ENCODE measurements at regions of chr21 and their contacts with region 1.

Region 1: DNA sequence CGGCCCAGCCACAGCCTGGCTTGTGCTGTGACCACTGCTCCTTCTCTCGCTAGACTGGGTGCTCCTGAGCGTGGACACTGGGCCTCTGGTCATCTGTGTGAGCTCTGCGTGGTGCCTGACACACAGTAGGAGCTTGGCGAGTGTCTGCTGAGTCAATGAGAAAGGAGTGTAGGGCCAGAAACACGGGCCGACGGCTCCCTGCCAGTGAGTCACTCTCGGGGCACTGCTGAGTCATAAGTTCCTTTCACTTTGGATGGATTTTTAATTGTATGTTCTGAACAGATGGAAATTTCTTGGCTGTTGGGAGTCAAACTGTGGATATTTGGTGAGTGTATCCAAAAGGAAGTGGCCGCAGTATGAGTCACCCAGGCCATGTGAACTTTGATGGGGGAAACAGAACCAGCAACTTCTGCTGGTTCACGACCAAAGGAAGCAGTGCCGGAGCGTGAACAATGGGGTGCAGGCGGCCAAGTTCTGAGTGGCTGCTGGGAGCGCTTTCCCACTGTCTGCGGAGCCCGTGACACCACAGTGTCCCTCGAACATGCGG is 41.0 kb upstream of the COL18A1 start:
- DNase-seq: peak; percentile 99
- ATAC-seq: peak; percentile 70
- H3K4me3 ChIP-seq: peak overlapping the region; percentile 25; the same call in 1 of the 2 replicates
- H3K27ac ChIP-seq: peak overlapping the region; percentile 98
- H3K4me1 ChIP-seq: peaks cover 46% of the 10 kb centered on the region
- H3K27me3 ChIP-seq: no peaks in the 10 kb centered on the region
- CTCF ChIP-seq: no peak

Region 2: DNA sequence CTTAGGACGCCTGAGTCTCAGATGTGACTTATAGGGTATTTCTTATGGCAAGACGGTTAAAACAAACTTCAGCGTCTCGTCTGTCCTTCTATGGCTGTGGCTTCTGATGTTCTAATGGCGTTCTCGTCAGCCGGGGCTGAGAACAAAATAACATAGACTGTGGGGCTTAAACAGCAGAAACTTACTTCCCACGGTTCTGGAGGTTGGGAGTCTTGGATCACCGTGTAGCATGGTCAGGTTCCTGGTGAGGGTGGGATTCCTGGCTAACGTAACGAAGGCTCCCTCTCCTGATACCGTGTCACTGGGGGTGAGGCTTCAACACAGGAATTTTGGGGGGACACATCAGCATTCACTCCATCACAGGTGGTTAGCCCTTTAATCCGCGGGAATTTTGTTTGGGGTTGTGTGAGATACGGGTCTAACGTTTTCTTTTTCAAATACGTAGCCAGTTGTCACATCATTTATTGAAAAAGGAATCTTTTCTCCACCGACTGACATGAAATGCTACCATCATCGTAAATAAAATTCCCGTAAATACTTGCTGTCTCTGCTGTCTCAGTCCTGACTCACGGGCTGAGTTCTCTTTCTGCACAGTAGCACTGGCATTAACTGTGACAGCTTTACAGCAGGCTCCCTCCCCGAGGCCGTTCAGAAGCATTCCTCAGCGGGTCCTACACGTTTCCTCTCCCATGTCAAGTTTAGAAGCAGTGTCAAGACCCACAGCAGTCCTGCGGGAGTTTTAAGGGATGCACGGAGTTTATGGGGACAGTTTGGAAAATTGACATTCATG is 68.2 kb before region 1 on chr21:
- CTCF ChIA-PET with region 1: no interaction called
- POLR2A ChIA-PET with region 1: no interaction called
- intact Hi-C with region 1: loop called (anchors 1 kb)
- DNase-seq: peak; percentile 84
- ATAC-seq: peak; percentile 61
- H3K4me3 ChIP-seq: peak overlapping the region; percentile 32
- H3K27ac ChIP-seq: peak overlapping the region; percentile 90
- H3K4me1 ChIP-seq: peaks cover 48% of the 10 kb centered on the region
- H3K27me3 ChIP-seq: no peaks in the 10 kb centered on the region
- CTCF ChIP-seq: no peak

Region 3: GRCh38 chr21:45330075-45330781 is 33.8 kb before region 1 on chr21:
- CTCF ChIA-PET with region 1: no interaction called
- POLR2A ChIA-PET with region 1: no interaction called
- intact Hi-C with region 1: loop called (anchors 1 kb)
- DNase-seq: peak; percentile 86
- ATAC-seq: peak; percentile 88
- H3K4me3 ChIP-seq: peak overlapping the region; percentile 48; the same call in 1 of the 2 replicates
- H3K27ac ChIP-seq: peak overlapping the region; percentile 71
- H3K4me1 ChIP-seq: peaks cover 25% of the 10 kb centered on the region
- H3K27me3 ChIP-seq: no peaks in the 10 kb centered on the region
- CTCF ChIP-seq: no peak

Region 4: DNA sequence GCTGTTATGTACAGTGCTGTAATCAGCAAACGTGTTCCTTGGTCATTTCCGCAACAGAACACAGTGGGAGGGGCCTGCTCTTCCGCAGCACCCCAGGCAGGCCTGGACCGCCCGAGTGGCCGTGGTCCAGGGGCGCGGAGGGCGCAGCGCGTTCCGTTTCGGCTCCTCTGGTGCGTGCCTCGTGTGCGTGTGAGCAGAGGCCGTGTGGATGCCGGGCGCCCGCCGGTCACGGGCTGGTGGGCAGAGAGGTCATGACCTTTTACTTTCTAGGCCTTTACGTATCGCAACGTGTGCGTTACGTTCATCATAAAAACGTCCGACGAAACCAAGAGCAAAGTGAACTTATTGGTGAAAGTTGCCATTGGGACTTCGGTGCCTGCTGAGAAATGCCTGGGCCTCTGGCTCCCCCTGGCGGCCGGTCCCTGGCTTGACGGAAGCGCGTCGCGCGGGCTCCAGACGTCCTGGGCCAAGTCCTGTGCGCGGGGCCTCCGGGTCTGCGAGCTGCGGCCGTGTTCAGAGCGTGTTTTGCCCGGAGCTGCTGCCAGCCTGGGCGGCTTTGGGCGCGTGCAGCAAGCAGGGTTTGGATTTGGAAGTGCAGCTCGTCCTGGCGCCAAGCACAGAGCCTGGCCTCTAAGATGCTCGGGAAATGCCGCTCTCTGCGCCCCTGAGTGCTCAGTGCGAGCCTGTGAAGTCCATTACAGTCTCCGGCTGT is 75.3 kb after region 1 on chr21:
- CTCF ChIA-PET with region 1: no interaction called
- POLR2A ChIA-PET with region 1: no interaction called
- intact Hi-C with region 1: loop called (anchors 1 kb)
- DNase-seq: peak; percentile 90
- ATAC-seq: peak; percentile 89
- H3K4me3 ChIP-seq: peak overlapping the region; percentile 58
- H3K27ac ChIP-seq: peak overlapping the region; percentile 44
- H3K4me1 ChIP-seq: peaks cover 6% of the 10 kb centered on the region; the same call in 1 of the 2 replicates
- H3K27me3 ChIP-seq: no peaks in the 10 kb centered on the region
- CTCF ChIP-seq: peak; percentile 94

Region 5: GRCh38 chr21:45554477-45555175 is 190.6 kb after region 1 on chr21:
- CTCF ChIA-PET with region 1: no interaction called
- POLR2A ChIA-PET with region 1: no interaction called
- intact Hi-C with region 1: no loop called
- DNase-seq: peak; percentile 78
- ATAC-seq: peak; percentile 60
- H3K4me3 ChIP-seq: peak overlapping the region; percentile 76
- H3K27ac ChIP-seq: peak overlapping the region; percentile 17
- H3K4me1 ChIP-seq: peaks cover 14% of the 10 kb centered on the region
- H3K27me3 ChIP-seq: no peaks in the 10 kb centered on the region
- CTCF ChIP-seq: peak; percentile 68

Measured in PC-3 (cell line).